Right ventricle myocardium inferior (tissue), 1 donor: ENCODE measurements at regions of chr14 and their contacts with region 1.

Region 1: GRCh38 chr14:90399541-90400444 is 3.0 kb downstream of the CALM1 start:
- DNase-seq: peak; percentile 95
- ATAC-seq: peak; percentile 73

Region 2: GRCh38 chr14:90301668-90302090 is 98.1 kb before region 1 on chr14:
- intact Hi-C with region 1: loop called (anchors 2 kb)
- DNase-seq: no peak
- ATAC-seq: peak; percentile 58

Region 3: GRCh38 chr14:90383075-90383730 is 16.6 kb before region 1 on chr14:
- intact Hi-C with region 1: loop called (anchors 1 kb)
- DNase-seq: peak; percentile 100
- ATAC-seq: peak; percentile 95

Region 4: DNA sequence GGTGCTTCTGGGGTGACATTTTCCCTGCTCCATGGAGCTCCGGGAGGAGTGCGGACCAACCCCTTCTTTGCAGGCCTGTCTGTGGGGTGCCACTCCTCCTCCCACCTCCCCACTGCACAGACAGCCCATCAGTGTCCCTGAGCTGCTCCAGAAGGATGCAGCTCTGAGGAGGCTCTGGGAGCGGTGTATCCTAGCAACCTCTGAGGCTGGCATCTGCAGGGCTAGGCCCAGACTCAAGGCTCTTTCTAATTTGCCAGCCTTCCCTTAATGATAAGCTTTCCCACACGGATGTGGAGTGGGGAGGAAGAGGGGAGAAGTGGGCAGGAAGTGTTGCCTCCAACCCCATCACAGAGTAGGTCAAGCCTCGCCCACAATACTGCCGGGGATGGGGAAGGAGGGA is 56.8 kb after region 1 on chr14:
- intact Hi-C with region 1: no loop called
- DNase-seq: no peak
- ATAC-seq: no peak

Region 5: DNA sequence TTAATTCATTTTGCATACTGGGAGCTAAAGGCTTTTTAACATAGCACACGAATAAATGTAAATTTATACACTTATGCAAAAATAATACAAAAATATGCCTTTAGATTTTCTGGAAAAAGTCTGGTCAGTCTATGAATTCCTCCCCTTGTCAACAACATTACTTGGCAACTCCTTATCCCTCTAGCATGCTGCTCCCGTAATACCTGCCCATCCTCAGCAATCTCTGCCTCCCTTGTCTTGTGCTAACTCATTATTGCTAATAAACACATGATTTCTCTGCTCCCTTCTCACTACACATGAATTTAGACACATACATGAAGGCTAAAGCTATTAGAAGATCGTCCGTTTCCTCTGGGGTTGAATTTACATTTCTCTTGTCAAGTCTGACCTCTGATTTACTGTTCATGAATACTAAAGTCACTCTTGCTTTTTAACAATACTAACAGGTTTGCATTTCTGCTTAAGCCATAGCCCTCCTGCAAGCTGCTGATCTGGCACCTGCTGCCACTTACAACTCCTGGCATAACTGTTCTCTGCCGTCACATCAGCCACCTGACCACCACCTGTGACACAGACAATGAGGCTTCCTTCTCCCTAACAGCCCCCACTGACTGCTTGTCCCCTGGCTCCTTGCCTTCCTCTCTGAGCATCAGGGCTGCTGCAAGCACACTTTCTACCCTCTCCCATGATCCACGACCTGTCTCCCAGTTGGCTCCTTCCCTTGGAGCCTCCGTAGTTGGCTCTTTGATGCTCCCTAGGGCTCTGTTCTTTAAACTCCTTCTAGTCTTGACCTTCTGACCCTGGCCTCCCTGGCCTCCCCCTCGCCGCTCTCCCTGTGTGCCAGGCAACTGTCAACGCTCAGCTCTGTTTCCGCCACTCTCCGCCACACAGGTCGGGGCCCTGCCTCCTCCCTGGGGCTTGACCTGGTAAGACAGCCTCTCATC is 174.7 kb after region 1 on chr14:
- intact Hi-C with region 1: loop called (anchors 2 kb)
- DNase-seq: peak; percentile 81
- ATAC-seq: peak; percentile 82

Region 6: GRCh38 chr14:90697577-90698206 is 297.9 kb after region 1 on chr14:
- intact Hi-C with region 1: loop called (anchors 1 kb)
- DNase-seq: peak; percentile 91
- ATAC-seq: peak; percentile 92